HepG2 (cell line): ENCODE measurements at regions of chr9 and their contacts with region 1.

Region 1: DNA sequence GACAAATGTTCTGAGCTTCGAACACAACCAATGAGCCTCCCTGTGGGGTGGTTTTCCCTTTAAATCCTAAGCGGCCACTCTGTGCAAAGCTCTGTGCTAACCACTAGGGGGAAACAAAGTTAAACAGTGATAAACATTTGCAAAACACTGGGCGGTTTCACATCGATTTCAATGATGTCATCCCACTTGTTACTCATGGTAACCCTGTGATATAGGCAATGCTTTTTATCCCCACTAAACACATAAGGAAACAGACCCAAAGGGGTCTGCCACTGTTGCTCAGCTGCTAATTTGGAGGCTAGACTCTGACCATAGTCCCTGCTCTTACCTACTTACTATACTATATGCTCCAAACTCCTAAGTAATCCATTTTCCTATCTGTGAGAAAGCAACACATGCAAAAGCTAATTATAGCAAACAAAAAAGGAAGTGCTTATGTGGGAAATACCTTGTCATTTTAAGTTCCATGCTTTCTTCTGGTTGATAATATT is 57.3 kb downstream of the PTPN3 start:
- DNase-seq: peak; percentile 82
- ATAC-seq: peak; percentile 94
- H3K4me3 ChIP-seq: no peak overlapping the region
- H3K27ac ChIP-seq: peak overlapping the region; percentile 54
- H3K4me1 ChIP-seq: peaks cover 16% of the 10 kb centered on the region
- H3K27me3 ChIP-seq: no peaks in the 10 kb centered on the region
- CTCF ChIP-seq: peak; percentile 80
- EP300 ChIP-seq: no peak
- POLR2A ChIP-seq: no peak
- RAD21 ChIP-seq: peak; percentile 67

Region 2: DNA sequence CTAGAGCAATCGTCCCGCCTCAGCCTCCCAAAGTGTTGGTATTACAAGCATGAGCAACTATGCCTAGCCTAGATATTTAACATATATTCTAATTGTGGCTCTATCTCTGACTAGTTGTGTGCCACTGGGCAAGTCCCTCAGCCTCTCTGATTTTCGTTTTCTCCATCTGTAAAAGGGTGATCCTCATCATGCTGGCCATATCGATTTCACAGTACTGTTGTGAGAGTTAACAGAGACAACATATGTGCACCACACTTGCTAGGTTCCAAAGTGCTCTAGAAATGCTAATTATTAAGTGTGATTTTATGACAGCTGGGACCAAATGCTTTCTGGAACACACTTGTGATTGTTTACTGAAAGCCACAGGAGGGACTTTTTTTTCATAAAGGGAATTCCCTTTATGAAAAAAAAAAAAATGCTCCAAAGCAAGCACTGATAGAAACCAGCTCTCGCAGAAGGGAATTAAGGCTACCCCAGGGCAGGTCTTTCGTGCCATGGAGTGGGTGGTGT is 41.5 kb before region 1 on chr9:
- CTCF ChIA-PET with region 1: no interaction called
- POLR2A ChIA-PET with region 1: no interaction called
- in situ Hi-C with region 1: no loop called
- intact Hi-C with region 1: no loop called
- DNase-seq: no peak
- ATAC-seq: no peak
- H3K4me3 ChIP-seq: no peak overlapping the region
- H3K27ac ChIP-seq: no peak overlapping the region
- H3K4me1 ChIP-seq: no peaks in the 10 kb centered on the region
- H3K27me3 ChIP-seq: no peaks in the 10 kb centered on the region
- CTCF ChIP-seq: no peak
- EP300 ChIP-seq: no peak
- POLR2A ChIP-seq: no peak
- RAD21 ChIP-seq: no peak

Region 3: DNA sequence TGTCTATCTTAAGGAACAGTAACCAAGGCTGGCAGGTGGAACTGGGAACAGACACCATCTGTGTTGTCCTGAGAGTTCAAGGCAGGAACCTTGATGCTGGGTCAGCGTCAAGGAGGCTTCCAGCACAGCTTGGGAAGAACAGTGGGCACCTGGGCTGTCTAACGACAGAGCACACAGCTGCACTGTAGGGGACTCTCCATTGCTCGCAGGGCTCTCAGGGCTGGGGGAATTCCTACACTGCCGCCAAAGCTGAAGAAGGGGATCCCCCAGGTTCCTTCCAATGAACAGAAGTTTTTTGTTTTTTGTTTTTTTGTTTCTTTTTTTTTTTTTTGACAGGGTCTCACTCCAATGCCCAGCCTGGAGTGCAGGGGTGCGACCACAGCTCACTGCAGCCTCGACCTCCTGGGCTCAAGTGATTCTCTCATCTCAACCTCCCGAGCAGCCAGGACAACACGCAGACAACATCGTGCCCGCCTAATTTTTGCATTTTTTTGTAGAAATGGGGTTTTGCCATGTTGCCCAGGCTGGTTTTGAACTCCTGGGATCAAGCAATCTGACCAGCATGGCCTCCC is 24.6 kb before region 1 on chr9:
- CTCF ChIA-PET with region 1: no interaction called
- POLR2A ChIA-PET with region 1: no interaction called
- in situ Hi-C with region 1: no loop called
- intact Hi-C with region 1: no loop called
- DNase-seq: no peak
- ATAC-seq: no peak
- H3K4me3 ChIP-seq: no peak overlapping the region
- H3K27ac ChIP-seq: no peak overlapping the region
- H3K4me1 ChIP-seq: no peaks in the 10 kb centered on the region
- H3K27me3 ChIP-seq: no peaks in the 10 kb centered on the region
- CTCF ChIP-seq: no peak
- EP300 ChIP-seq: no peak
- POLR2A ChIP-seq: no peak
- RAD21 ChIP-seq: no peak

Region 4: GRCh38 chr9:109469646-109470358 is 29.0 kb after region 1 on chr9:
- CTCF ChIA-PET with region 1: interaction called, 12 read pairs
- POLR2A ChIA-PET with region 1: interaction called, 3 read pairs
- in situ Hi-C with region 1: no loop called
- intact Hi-C with region 1: loop called (anchors 1 kb)
- DNase-seq: peak; percentile 63
- ATAC-seq: peak; percentile 99
- H3K4me3 ChIP-seq: no peak overlapping the region
- H3K27ac ChIP-seq: no peak overlapping the region
- H3K4me1 ChIP-seq: peaks cover 19% of the 10 kb centered on the region
- H3K27me3 ChIP-seq: no peaks in the 10 kb centered on the region
- CTCF ChIP-seq: peak; percentile 86
- EP300 ChIP-seq: no peak
- POLR2A ChIP-seq: no peak
- RAD21 ChIP-seq: peak; percentile 60

Region 5: GRCh38 chr9:109560457-109561132 is 119.8 kb after region 1 on chr9:
- CTCF ChIA-PET with region 1: interaction called, 3 read pairs
- POLR2A ChIA-PET with region 1: no interaction called
- in situ Hi-C with region 1: no loop called
- intact Hi-C with region 1: loop called (anchors 1 kb)
- DNase-seq: peak; percentile 16
- ATAC-seq: peak; percentile 96
- H3K4me3 ChIP-seq: no peak overlapping the region
- H3K27ac ChIP-seq: no peak overlapping the region
- H3K4me1 ChIP-seq: no peaks in the 10 kb centered on the region
- H3K27me3 ChIP-seq: peaks cover 0 to 1% of the 10 kb centered on the region in 2 experiments; a peak in 2 of 5 replicates
- CTCF ChIP-seq: peak; percentile 51
- EP300 ChIP-seq: no peak
- POLR2A ChIP-seq: no peak
- RAD21 ChIP-seq: no peak